Transverse colon (tissue), 4 donors: ENCODE measurements at regions of chr6 and their contacts with region 1.

Region 1: GRCh38 chr6:123662757-123663156 is 26.0 kb upstream of the TRDN start:
- DNase-seq: no peak
- H3K4me3 ChIP-seq: no peak overlapping the region
- H3K27ac ChIP-seq: no peak overlapping the region
- H3K4me1 ChIP-seq: no peaks in the 10 kb centered on the region
- H3K27me3 ChIP-seq: no peaks in the 10 kb centered on the region
- CTCF ChIP-seq: no peak
- EP300 ChIP-seq: no peak
- POLR2A ChIP-seq: no peak

Region 2: GRCh38 chr6:123467392-123467791 is 195.4 kb before region 1 on chr6:
- in situ Hi-C with region 1: no loop called
- intact Hi-C with region 1: no loop called
- DNase-seq: no peak
- H3K4me3 ChIP-seq: no peak overlapping the region
- H3K27ac ChIP-seq: no peak overlapping the region
- H3K4me1 ChIP-seq: no peaks in the 10 kb centered on the region
- H3K27me3 ChIP-seq: no peaks in the 10 kb centered on the region
- CTCF ChIP-seq: no peak
- EP300 ChIP-seq: no peak
- POLR2A ChIP-seq: no peak

Region 3: DNA sequence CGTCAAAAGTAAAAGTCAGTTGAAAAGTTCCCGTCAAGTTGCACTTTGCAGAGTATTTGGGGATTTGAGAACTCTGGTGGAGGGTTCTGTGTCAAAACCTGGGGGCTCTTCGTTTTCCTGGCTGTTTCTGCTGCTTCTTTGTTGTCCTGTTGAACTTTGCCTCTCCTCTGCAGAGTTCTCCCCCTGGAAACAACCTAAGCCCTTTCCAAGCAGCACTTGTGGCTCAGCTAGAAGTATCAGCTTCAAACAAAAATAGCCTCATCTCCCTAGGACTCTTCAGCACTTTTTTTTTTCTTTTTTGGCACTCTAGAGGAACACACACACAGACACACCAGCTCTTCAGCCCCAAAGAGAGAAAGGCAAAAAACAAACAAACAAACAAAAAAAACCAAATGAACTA is 26.0 kb before region 1 on chr6 and contains the start of gene TRDN:
- in situ Hi-C with region 1: no loop called
- intact Hi-C with region 1: loop called (anchors 2 kb)
- DNase-seq: no peak
- H3K4me3 ChIP-seq: no peak within 1 kb of the TSS
- H3K27ac ChIP-seq: no peak within 1 kb of the TSS
- H3K4me1 ChIP-seq: no peaks in the 10 kb centered on the region
- H3K27me3 ChIP-seq: no peaks in the 10 kb centered on the region
- CTCF ChIP-seq: no peak
- EP300 ChIP-seq: no peak
- POLR2A ChIP-seq: no peak
- total RNA-seq, gene TRDN: 0.14 TPM in 1 of 4 donors, not detected in the others